ENCODE measurements at regions of chr1 and their contacts with region 1.

Region 1: GRCh38 chr1:58968360-58968952 is 184.6 kb upstream of the JUN start:
- DNase-seq: peak; percentile 92
- ATAC-seq: peak; percentile 92
- H3K4me3 ChIP-seq: peak overlapping the region; percentile 58
- H3K27ac ChIP-seq: peak overlapping the region; percentile 94
- H3K4me1 ChIP-seq: peaks cover 27% of the 10 kb centered on the region
- H3K27me3 ChIP-seq: no peaks in the 10 kb centered on the region
- CTCF ChIP-seq: no peak
- EP300 ChIP-seq: peak; percentile 22 to 29; a peak in 1 of 4 replicates
- POLR2A ChIP-seq: peak; percentile 64
- RAD21 ChIP-seq: peak; percentile 37

Region 2: DNA sequence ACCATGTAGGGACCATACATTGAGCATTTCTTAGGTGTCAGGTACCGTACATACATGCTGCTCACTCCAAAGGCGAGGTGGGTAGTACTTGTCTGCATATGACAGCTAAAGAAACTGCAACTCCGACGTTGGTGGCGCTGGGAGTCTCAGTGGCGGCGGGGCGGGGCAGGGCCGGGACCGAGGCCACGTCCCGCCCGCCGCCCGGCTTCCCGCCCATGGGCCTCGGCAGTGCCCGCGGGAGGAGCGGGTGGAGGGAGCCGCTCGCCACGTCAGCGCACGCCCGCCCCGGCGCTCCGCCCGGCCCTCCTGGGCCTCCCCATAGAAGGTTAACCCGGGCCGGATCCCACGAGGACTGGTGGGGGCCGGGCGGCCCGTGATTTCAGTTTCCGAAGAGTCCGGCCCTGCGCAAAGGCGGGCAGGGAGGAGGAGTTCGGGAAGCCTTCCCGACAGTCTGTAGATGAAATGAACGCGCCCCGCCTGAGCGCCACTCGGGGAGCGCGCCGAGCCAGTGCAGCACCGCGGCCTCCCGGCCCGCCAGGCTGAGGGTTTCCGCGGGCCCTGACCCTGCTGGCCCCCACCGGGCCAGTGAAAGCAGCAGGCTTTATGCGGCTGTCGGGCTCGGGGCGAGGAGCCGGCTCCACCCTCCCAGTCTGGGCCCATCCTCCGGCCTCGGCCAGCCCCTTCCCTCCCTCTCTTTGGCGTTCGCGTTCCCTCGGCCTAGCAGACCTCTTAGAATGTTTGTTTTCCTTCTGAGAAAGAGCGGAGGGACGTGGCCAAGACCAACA is 64.8 kb before region 1 on chr1:
- CTCF ChIA-PET with region 1: no interaction called
- POLR2A ChIA-PET with region 1: no interaction called
- RAD21 ChIA-PET with region 1: interaction called, 8 read pairs
- SMC1A ChIA-PET with region 1: interaction called, 10 read pairs
- in situ Hi-C with region 1: no loop called
- intact Hi-C with region 1: loop called (anchors 2 kb)
- DNase-seq: peak; percentile 59
- ATAC-seq: peak; percentile 96
- H3K4me3 ChIP-seq: peak overlapping the region; percentile 58; the same call in 1 of the 2 replicates
- H3K27ac ChIP-seq: peak overlapping the region; percentile 60
- H3K4me1 ChIP-seq: peaks cover 9% of the 10 kb centered on the region; the same call in 1 of the 2 replicates
- H3K27me3 ChIP-seq: no peaks in the 10 kb centered on the region
- CTCF ChIP-seq: no peak
- EP300 ChIP-seq: no peak
- POLR2A ChIP-seq: peak; percentile 81
- RAD21 ChIP-seq: no peak

Region 3: GRCh38 chr1:59007820-59008598 is 39.6 kb after region 1 on chr1:
- CTCF ChIA-PET with region 1: interaction called, 10 read pairs
- POLR2A ChIA-PET with region 1: interaction called, 22 read pairs
- RAD21 ChIA-PET with region 1: interaction called, 34 read pairs
- SMC1A ChIA-PET with region 1: interaction called, 38 read pairs
- in situ Hi-C with region 1: no loop called
- intact Hi-C with region 1: loop called (anchors 2 kb)
- DNase-seq: no peak
- ATAC-seq: peak; percentile 71
- H3K4me3 ChIP-seq: peak overlapping the region; percentile 9; the same call in 1 of the 2 replicates
- H3K27ac ChIP-seq: peak overlapping the region; percentile 15
- H3K4me1 ChIP-seq: peaks cover 55% of the 10 kb centered on the region
- H3K27me3 ChIP-seq: no peaks in the 10 kb centered on the region
- CTCF ChIP-seq: no peak
- EP300 ChIP-seq: peak; percentile 14 to 63; a peak in 3 of 4 replicates
- POLR2A ChIP-seq: no peak
- RAD21 ChIP-seq: no peak

Region 4: GRCh38 chr1:59020151-59020997 is 51.9 kb after region 1 on chr1:
- CTCF ChIA-PET with region 1: interaction called, 3 read pairs
- POLR2A ChIA-PET with region 1: interaction called, 10 read pairs
- RAD21 ChIA-PET with region 1: interaction called, 19 read pairs
- SMC1A ChIA-PET with region 1: interaction called, 15 read pairs
- in situ Hi-C with region 1: no loop called
- intact Hi-C with region 1: no loop called
- DNase-seq: peak; percentile 87
- ATAC-seq: peak; percentile 93
- H3K4me3 ChIP-seq: peak overlapping the region; percentile 53; the same call in 1 of the 2 replicates
- H3K27ac ChIP-seq: peak overlapping the region; percentile 75
- H3K4me1 ChIP-seq: peaks cover 20% of the 10 kb centered on the region
- H3K27me3 ChIP-seq: no peaks in the 10 kb centered on the region
- CTCF ChIP-seq: no peak
- EP300 ChIP-seq: no peak
- POLR2A ChIP-seq: no peak
- RAD21 ChIP-seq: peak; percentile 12; the same call in 1 of the 2 replicates

Region 5: DNA sequence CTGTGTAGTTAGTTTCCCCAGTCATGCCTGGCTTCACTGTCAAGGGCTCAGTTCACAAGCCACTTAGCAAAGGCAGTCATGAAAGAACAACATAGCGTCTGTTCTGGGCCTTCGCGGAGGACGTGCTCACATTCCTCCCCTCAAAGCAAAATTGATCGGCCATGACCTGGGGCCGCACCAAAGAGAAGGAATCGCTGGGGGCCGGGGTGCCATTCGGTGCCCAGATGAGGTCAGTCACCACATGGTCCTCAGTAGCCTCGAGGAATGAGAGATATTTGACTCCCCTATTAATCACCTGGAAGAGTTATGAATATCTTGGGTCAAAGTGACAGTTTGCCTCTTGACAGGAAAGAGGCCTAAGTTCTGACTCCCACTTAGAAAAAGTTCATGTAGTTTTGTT is 66.5 kb after region 1 on chr1:
- CTCF ChIA-PET with region 1: no interaction called
- POLR2A ChIA-PET with region 1: no interaction called
- RAD21 ChIA-PET with region 1: no interaction called
- SMC1A ChIA-PET with region 1: no interaction called
- in situ Hi-C with region 1: no loop called
- intact Hi-C with region 1: no loop called
- DNase-seq: no peak
- ATAC-seq: no peak
- H3K4me3 ChIP-seq: no peak overlapping the region
- H3K27ac ChIP-seq: no peak overlapping the region
- H3K4me1 ChIP-seq: no peaks in the 10 kb centered on the region
- H3K27me3 ChIP-seq: no peaks in the 10 kb centered on the region
- CTCF ChIP-seq: no peak
- EP300 ChIP-seq: no peak
- POLR2A ChIP-seq: no peak
- RAD21 ChIP-seq: no peak

Measured in GM12878 (cell line).